Heart left ventricle (tissue), 16 donors: ENCODE measurements at regions of chr1 and their contacts with region 1.

Region 1: GRCh38 chr1:19179597-19180264 is 30.3 kb downstream of the UBR4 start:
- DNase-seq: no peak
- ATAC-seq: peak; percentile 48 to 71 (median 60)
- H3K4me3 ChIP-seq: no peak overlapping the region
- H3K27ac ChIP-seq: peak overlapping the region in 1 of 12 donors; percentile 35
- H3K4me1 ChIP-seq: peaks cover 0 to 5% (median 0%) of the 10 kb centered on the region in 12 donors
- H3K27me3 ChIP-seq: no peaks in the 10 kb centered on the region
- CTCF ChIP-seq: peak in 11 of 12 donors; percentile 7 to 52 (median 35)
- POLR2A ChIP-seq: no peak

Region 2: DNA sequence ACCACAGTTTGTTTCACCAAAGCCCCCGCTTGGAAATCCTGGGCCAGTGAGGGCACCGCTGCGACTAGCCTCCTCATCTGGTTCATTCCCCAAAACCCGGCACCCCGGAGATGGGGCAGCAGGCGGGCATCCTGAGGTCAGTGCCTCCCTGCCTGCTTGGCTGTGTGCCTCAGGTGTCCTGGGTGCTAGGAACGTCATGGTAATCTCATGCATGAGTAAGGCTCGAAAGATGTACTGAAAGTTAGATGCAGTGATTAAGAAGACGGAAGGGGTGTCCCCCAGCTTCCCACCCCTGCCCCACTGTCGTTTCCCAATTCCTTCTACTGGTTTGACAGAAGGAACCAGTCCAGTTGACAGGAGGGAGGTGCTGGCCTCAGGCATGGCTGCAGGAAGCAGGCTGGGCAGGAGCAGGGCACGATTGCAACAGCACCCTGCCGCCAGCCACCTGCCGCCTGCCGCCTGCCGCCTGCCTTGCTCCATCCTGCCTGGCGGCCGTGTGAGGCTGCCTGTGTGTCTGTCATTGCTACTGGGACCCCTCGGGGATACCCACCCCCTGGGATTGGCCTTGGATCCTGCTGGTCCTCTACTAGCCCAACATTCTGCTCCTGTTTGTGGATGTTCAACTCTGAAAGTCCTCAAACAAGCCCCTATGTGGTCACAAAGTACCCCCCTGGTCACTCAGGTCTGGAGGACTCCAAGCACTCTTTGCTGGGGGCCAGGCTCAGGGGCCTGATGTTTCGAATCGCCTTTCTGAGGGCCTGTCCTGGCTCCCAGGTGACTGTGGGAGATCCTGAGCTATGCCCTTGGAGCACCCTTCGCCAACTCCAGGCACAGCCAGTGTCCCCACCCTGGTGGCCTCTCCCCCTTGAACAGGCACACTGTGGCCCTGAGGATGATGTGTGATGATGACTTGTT is 150.3 kb before region 1 on chr1:
- intact Hi-C with region 1: no loop called
- DNase-seq: no peak
- ATAC-seq: peak in 1 of 4 donors; percentile 20
- H3K4me3 ChIP-seq: no peak overlapping the region
- H3K27ac ChIP-seq: no peak overlapping the region
- H3K4me1 ChIP-seq: peaks cover 0 to 3% (median 0%) of the 10 kb centered on the region in 12 donors
- H3K27me3 ChIP-seq: peaks cover 0 to 18% (median 7%) of the 10 kb centered on the region in 9 donors
- CTCF ChIP-seq: no peak
- POLR2A ChIP-seq: no peak

Region 3: GRCh38 chr1:19113697-19114092 is 66.0 kb before region 1 on chr1:
- intact Hi-C with region 1: loop called in 1 of 10 experiments (anchors 10 kb)
- DNase-seq: no peak
- ATAC-seq: peak in 2 of 4 donors; percentile 28 to 45
- H3K4me3 ChIP-seq: no peak overlapping the region
- H3K27ac ChIP-seq: no peak overlapping the region
- H3K4me1 ChIP-seq: no peaks in the 10 kb centered on the region
- H3K27me3 ChIP-seq: no peaks in the 10 kb centered on the region
- CTCF ChIP-seq: peak in 10 of 12 donors; percentile 14 to 56 (median 32)
- POLR2A ChIP-seq: no peak

Region 4: DNA sequence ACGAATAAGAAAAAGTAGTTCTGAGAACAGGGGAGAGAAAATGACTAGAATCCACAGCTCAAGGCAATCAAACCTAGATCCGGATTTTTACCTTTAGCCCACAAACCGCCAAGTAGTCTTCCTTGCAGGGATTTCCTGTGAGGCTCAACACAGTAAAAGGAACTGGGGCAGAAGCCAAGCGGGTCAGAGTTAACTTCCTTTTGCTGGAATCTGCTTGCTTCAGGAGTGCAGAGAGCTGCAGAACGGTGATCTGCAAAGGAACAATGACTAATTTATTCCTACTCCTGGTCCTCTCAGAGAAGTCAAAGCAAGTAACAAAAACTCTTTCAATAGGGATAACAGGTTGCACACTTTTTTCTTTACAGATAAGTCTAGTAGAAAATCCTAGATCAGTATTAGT is 23.1 kb before region 1 on chr1:
- intact Hi-C with region 1: no loop called
- DNase-seq: peak in 4 of 5 donors; percentile 56 to 75 (median 69)
- ATAC-seq: peak; percentile 39 to 95 (median 82)
- H3K4me3 ChIP-seq: no peak overlapping the region
- H3K27ac ChIP-seq: peak overlapping the region in 10 of 12 donors; percentile 45 to 72 (median 62)
- H3K4me1 ChIP-seq: peaks cover 0 to 33% (median 10%) of the 10 kb centered on the region in 12 donors
- H3K27me3 ChIP-seq: no peaks in the 10 kb centered on the region
- CTCF ChIP-seq: no peak
- POLR2A ChIP-seq: no peak

Region 5: DNA sequence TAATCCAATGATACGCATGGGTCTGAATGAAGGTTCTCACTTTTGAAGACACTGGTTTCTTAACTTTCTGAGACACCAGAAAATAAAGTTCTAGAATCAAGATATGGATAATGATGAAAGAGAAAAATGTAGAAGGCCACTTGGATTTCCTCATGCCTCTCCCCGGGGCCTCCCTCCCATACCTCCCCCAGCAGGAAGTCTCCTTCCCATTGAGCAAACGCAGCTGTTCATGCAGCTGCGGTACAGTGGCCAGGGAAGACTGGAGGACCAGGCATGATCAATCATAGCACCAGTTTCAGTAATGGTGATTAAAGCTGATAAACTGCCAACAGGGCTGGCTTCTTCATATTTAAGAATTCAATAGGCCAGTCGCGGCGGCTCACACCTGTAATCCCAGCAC is 41.3 kb after region 1 on chr1:
- intact Hi-C with region 1: loop called in 1 of 10 experiments (anchors 5 kb)
- DNase-seq: peak in 2 of 5 donors; percentile 39 to 41
- ATAC-seq: peak in 3 of 4 donors; percentile 65 to 81 (median 65)
- H3K4me3 ChIP-seq: no peak overlapping the region
- H3K27ac ChIP-seq: peak overlapping the region in 2 of 12 donors; percentile 13 to 39
- H3K4me1 ChIP-seq: peaks cover 0 to 14% (median 0%) of the 10 kb centered on the region in 12 donors
- H3K27me3 ChIP-seq: no peaks in the 10 kb centered on the region
- CTCF ChIP-seq: no peak
- POLR2A ChIP-seq: no peak

Region 6: DNA sequence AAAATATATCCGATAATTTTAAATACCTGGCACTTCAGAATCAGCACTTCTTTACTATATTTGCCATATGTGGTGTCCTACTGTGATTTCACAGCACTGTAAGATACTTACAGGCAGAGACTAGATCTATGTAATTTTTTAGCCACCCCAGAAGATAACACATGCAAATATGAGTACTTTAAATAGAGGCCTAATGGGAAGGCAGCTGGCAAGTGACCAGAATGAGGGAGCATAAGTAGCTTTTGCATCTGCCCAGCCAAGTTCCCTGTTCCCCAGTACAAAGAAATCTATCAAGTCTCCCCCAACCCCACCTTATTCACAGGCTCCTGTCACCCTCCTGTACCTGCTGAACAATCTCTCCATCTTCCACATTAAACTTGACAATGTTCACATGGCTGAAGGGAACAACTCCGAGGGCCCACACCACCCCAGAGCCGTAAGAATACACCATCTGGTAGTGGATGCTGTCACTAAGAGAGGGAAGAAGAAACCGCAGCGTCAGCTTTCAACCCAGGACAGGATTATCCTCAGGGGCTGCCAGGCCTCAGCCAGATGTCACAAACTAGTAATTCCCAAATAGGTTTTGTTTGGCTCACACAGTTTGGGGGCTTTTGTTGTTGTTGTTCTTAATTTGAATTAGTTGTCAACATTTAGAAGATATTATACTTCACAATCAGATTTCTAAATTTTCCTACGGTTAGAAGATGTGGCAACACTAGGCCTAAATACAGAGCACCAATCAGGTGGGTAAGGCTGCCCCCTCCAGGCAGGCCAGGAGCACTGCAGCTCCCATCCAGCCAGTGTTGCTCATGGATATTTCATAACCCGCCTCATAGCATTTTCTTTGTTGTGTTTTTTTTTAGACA is 61.2 kb after region 1 on chr1:
- intact Hi-C with region 1: loop called in 8 of 10 experiments (anchors 1 to 5 kb)
- DNase-seq: peak in 4 of 5 donors; percentile 44 to 67 (median 58)
- ATAC-seq: peak; percentile 75 to 93 (median 92)
- H3K4me3 ChIP-seq: no peak overlapping the region
- H3K27ac ChIP-seq: no peak overlapping the region
- H3K4me1 ChIP-seq: peaks cover 0 to 6% (median 0%) of the 10 kb centered on the region in 12 donors
- H3K27me3 ChIP-seq: no peaks in the 10 kb centered on the region
- CTCF ChIP-seq: peak; percentile 85 to 99 (median 96)
- POLR2A ChIP-seq: no peak